ENCODE measurements at regions of chr7 and their contacts with region 1.

Region 1: DNA sequence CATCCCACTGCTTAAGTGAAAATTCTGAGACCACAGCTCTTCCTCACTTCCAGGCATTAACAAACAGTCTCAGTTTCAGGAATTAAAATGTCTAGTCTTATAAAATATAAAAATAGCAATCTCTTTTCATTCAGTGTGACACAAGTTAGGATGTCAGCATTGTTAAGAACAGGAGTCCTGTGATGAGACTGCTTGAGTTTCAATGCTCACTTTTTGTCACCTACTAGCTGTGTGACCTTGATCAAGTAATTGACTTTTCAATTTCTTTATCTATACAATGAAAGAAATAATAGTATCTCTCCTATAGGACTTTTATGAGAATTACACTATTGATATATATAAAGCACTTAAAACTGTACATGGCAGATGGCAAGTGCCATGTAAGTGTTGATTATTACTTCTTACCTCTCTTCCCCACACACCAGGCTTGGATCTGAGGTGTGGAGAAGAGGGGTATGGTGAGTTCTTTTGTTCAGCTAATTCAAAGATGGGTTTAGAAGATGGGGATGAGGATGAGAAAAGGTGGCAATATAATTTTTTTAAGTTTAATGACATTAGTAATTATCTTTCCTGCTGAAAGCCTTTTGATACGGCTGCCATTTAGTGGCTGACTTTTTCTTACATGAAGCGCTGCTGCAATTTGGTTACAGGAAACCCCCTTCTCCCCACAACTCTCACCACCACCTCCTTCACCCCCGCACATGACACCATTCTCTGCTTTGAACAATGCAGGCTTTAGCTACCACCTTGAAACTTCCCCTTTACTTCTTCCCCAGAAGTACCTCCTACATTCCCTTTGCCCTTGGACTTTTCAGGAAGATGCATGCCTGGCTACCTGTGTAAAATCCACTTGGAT is 20.8 kb upstream of the HYAL4 start:
- DNase-seq: peak; percentile 78
- H3K4me3 Mint-ChIP-seq: peak overlapping the region; percentile 31
- H3K27ac Mint-ChIP-seq: peak overlapping the region; percentile 66
- H3K4me1 Mint-ChIP-seq: peaks cover 16% of the 10 kb centered on the region
- H3K27me3 Mint-ChIP-seq: peaks cover 14% of the 10 kb centered on the region

Region 2: DNA sequence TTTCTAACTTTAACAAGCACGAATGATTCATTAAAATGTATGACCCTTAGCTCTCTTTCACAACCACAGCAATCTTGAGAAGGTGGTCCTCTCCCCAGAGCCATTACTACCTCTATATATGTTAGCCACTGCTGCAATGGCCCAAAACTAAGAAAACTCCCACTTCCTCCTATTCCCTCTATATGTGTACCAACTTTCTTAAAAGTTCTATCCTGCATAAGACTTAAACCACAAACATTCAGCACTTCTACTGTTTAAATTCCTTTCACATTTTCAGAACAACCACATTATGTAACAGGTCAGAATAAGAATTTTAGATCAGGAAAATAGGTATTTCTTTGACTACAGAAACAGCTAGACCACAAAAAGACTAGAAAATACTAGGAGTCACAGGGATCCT is 111.5 kb before region 1 on chr7:
- intact Hi-C with region 1: loop called (anchors 1 kb)
- DNase-seq: no peak
- H3K4me3 Mint-ChIP-seq: peak overlapping the region; percentile 16
- H3K27ac Mint-ChIP-seq: peak overlapping the region; percentile 3
- H3K4me1 Mint-ChIP-seq: peaks cover 45% of the 10 kb centered on the region
- H3K27me3 Mint-ChIP-seq: no peaks in the 10 kb centered on the region

Region 3: GRCh38 chr7:123797673-123798527 is 26.2 kb before region 1 on chr7:
- intact Hi-C with region 1: no loop called
- DNase-seq: no peak
- H3K4me3 Mint-ChIP-seq: no peak overlapping the region
- H3K27ac Mint-ChIP-seq: no peak overlapping the region
- H3K4me1 Mint-ChIP-seq: peaks cover 2% of the 10 kb centered on the region
- H3K27me3 Mint-ChIP-seq: no peaks in the 10 kb centered on the region